ENCODE measurements at regions of chr2 and their contacts with region 1.

Region 1: GRCh38 chr2:26922405-26923188 is 47.8 kb upstream of the MAPRE3 start:
- DNase-seq: no peak
- H3K4me3 ChIP-seq: no peak overlapping the region
- H3K27ac ChIP-seq: no peak overlapping the region
- H3K4me1 ChIP-seq: peaks cover 0 to 8% (median 5%) of the 10 kb centered on the region in 4 experiments; a peak in 5 of 7 replicates
- H3K27me3 ChIP-seq: no peaks in the 10 kb centered on the region
- CTCF ChIP-seq: peak; percentile 82 to 88 (median 87)
- EP300 ChIP-seq: no peak
- POLR2A ChIP-seq: no peak
- RAD21 ChIP-seq: peak; percentile 79 to 84

Region 2: GRCh38 chr2:26883956-26884355 is 38.6 kb before region 1 on chr2:
- CTCF ChIA-PET with region 1: interaction called, 10 read pairs
- POLR2A ChIA-PET with region 1: no interaction called
- DNase-seq: peak in 1 of 2 experiments; percentile 43
- H3K4me3 ChIP-seq: no peak overlapping the region
- H3K27ac ChIP-seq: no peak overlapping the region
- H3K4me1 ChIP-seq: peaks cover 0 to 3% (median 0%) of the 10 kb centered on the region in 4 experiments; a peak in 1 of 7 replicates
- H3K27me3 ChIP-seq: no peaks in the 10 kb centered on the region
- CTCF ChIP-seq: no peak
- EP300 ChIP-seq: no peak
- POLR2A ChIP-seq: no peak
- RAD21 ChIP-seq: no peak

Region 3: GRCh38 chr2:26901326-26902183 is 21.0 kb before region 1 on chr2:
- CTCF ChIA-PET with region 1: interaction called, 12 read pairs
- POLR2A ChIA-PET with region 1: no interaction called
- DNase-seq: no peak
- H3K4me3 ChIP-seq: peak overlapping the region in 1 of 4 experiments; percentile 41; a peak in 1 of 8 replicates
- H3K27ac ChIP-seq: no peak overlapping the region
- H3K4me1 ChIP-seq: peaks cover 8 to 17% (median 12%) of the 10 kb centered on the region in 4 experiments; a peak in 6 of 7 replicates
- H3K27me3 ChIP-seq: 0 out of 7 replicates have a peak, but pooled peaks cover 0 to 2% (median 0%) of the 10 kb centered on the region in 4 experiments
- CTCF ChIP-seq: no peak
- EP300 ChIP-seq: no peak
- POLR2A ChIP-seq: no peak
- RAD21 ChIP-seq: no peak

Region 4: DNA sequence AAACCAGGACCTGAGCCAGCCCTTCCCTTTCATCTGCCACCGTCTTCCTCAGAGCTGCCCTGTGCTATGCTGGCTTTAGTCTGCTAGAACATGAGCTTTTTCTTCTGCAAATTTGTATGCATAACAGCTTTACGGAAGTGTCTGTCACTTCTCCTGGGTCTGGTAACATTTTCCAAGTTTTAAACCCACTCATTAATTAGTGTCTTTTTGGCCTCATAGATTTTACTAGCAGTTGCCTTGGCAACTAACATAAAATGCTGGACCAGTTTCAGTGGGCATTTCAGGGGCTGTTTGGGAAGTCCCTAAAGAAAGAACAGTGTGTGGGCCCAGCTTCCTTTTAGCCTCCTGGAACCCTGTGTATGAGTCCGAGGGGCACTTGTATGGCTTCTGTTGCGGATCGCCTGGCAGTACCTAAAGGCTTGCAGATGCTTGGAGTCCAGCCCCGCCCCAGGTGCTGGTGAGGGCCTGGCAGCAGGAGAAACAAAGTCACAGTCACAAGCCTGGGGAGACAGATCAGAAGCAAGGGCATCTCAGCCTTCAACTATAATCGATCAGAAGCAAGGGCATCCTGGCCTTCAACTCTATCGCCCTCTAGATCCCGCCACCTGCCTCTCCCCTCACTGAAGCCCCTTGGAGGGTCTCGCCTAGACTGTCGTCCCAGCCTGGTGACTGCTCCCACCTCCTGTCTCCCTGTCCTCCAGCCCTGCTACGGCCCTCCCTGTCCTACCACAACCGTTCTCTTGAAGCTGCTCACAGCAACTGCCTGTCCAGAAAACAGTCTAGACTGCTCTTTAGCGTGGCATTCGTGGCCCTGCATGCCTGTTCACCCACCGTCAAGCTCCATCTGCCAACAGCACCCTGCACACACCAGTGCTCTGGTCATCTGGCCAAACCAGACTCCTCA is 11.1 kb after region 1 on chr2:
- CTCF ChIA-PET with region 1: interaction called, 54 read pairs
- POLR2A ChIA-PET with region 1: interaction called, 3 read pairs
- DNase-seq: no peak
- H3K4me3 ChIP-seq: no peak overlapping the region
- H3K27ac ChIP-seq: no peak overlapping the region
- H3K4me1 ChIP-seq: peaks cover 0 to 4% (median 1%) of the 10 kb centered on the region in 4 experiments; a peak in 4 of 7 replicates
- H3K27me3 ChIP-seq: no peaks in the 10 kb centered on the region; a peak in 2 of 7 replicates
- CTCF ChIP-seq: peak in 1 of 3 experiments; percentile 15; a peak in 1 of 4 replicates
- EP300 ChIP-seq: no peak
- POLR2A ChIP-seq: no peak
- RAD21 ChIP-seq: no peak; a peak in 1 of 4 replicates

Region 5: GRCh38 chr2:27123302-27124231 is 201.0 kb after region 1 on chr2 and contains the start of gene ABHD1:
- CTCF ChIA-PET with region 1: no interaction called
- POLR2A ChIA-PET with region 1: no interaction called
- DNase-seq: peak in 1 of 2 experiments; percentile 85
- H3K4me3 ChIP-seq: peak within 1 kb of the TSS; percentile 33 to 68 (median 65)
- H3K27ac ChIP-seq: no peak within 1 kb of the TSS
- H3K4me1 ChIP-seq: peaks cover 0 to 15% (median 9%) of the 10 kb centered on the region in 4 experiments; a peak in 6 of 7 replicates
- H3K27me3 ChIP-seq: peaks cover 8 to 50% (median 38%) of the 10 kb centered on the region in 4 experiments
- CTCF ChIP-seq: no peak
- EP300 ChIP-seq: no peak
- POLR2A ChIP-seq: peak in 1 of 2 experiments; percentile 72; a peak in 2 of 3 replicates
- RAD21 ChIP-seq: no peak
- total RNA-seq, gene ABHD1: 0.20 and 0.50 TPM in 2 replicates

Measured in H1 (cell line).